CD4-positive, alpha-beta memory T cell (primary cell): ENCODE measurements at regions of chr12 and their contacts with region 1.

Region 1: DNA sequence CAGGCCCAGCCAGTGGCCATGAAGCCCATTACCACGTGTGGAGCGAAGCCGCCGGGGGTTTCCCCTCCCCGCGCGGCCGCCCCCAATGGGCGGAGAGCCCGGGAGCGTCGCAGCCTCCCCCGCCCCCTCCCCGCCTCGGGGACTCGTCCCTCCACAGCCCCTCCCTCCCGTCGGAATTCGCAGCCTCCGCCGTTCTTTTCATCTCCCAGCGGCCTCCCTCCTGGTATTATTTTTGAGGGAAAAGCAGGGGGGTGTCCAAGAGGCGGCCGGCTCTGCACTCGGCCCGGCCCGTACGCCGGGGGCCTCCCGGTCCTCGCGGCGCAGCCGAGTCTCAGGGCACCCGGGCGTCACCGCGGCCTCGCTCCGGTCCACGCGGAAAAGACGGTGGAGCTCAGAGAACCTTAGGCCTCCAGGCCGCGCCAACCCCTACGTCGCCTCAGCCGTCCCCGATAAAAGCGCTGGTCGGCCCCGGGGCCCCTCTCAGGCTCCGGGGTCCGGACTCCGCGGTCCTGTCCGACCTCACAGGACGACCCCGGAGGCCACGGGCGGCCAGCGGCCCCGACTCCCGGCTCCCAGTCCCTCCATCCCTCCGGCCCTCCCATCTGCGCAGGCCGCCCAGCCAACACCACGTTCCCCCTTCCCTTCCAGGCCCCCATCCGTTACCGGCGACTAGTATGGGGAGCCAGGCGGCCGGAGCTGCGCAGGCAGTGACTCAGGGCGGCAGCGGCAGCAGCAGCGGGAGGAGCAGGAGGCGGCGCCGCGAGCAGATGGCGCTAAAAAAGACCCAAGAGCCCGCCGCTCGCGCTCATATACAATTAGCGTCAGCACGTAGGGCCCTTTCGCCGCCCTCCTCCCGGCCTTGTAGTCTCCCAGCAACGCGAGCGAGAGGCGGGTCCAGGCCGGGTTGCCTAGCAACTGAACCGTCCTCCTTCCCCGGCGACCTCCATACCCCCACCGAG is at the start of gene NAP1L1:
- DNase-seq: peak; percentile 94 to 97 (median 96)
- H3K4me3 ChIP-seq: peak within 1 kb of the TSS; percentile 38 to 85
- H3K4me3 Mint-ChIP-seq: peak within 1 kb of the TSS; percentile 93 to 100 (median 98)
- H3K27ac ChIP-seq: peak within 1 kb of the TSS; percentile 100
- H3K27ac Mint-ChIP-seq: peak within 1 kb of the TSS; percentile 99 to 100 (median 100)
- H3K4me1 ChIP-seq: peaks cover 53% of the 10 kb centered on the region
- H3K4me1 Mint-ChIP-seq: peaks cover 33 to 68% (median 44%) of the 10 kb centered on the region in 4 donors
- H3K27me3 ChIP-seq: no peaks in the 10 kb centered on the region
- H3K27me3 Mint-ChIP-seq: peaks cover 0 to 2% of the 10 kb centered on the region in 2 donors
- total RNA-seq, gene NAP1L1: 673 to 718 TPM

Region 2: GRCh38 chr12:75390899-75391538 is 693.2 kb before region 1 on chr12 and contains the start of gene GLIPR1L2:
- CTCF ChIA-PET with region 1: no interaction called
- POLR2A ChIA-PET with region 1: interaction called, 8 read pairs
- intact Hi-C with region 1: loop called (anchors 1 kb)
- DNase-seq: peak; percentile 82 to 86 (median 84)
- H3K4me3 ChIP-seq: peak within 1 kb of the TSS; percentile 69 to 74
- H3K4me3 Mint-ChIP-seq: peak within 1 kb of the TSS; percentile 90 to 97 (median 93)
- H3K27ac ChIP-seq: peak within 1 kb of the TSS; percentile 74
- H3K27ac Mint-ChIP-seq: peak within 1 kb of the TSS; percentile 96 to 99 (median 97)
- H3K4me1 ChIP-seq: peaks cover 56% of the 10 kb centered on the region
- H3K4me1 Mint-ChIP-seq: peaks cover 38 to 71% (median 51%) of the 10 kb centered on the region in 4 donors
- H3K27me3 ChIP-seq: no peaks in the 10 kb centered on the region
- H3K27me3 Mint-ChIP-seq: no peaks in the 10 kb centered on the region
- total RNA-seq, gene GLIPR1L2: 0.47 to 0.55 TPM

Region 3: GRCh38 chr12:75977952-75978671 is 106.1 kb before region 1 on chr12:
- CTCF ChIA-PET with region 1: no interaction called
- POLR2A ChIA-PET with region 1: interaction called, 4 read pairs
- intact Hi-C with region 1: loop called (anchors 1 kb)
- DNase-seq: peak; percentile 69 to 95 (median 79)
- H3K4me3 ChIP-seq: no peak overlapping the region
- H3K4me3 Mint-ChIP-seq: peak overlapping the region; percentile 4 to 75 (median 48)
- H3K27ac ChIP-seq: peak overlapping the region; percentile 79
- H3K27ac Mint-ChIP-seq: peak overlapping the region; percentile 90 to 98 (median 92)
- H3K4me1 ChIP-seq: peaks cover 32% of the 10 kb centered on the region
- H3K4me1 Mint-ChIP-seq: peaks cover 25 to 55% (median 36%) of the 10 kb centered on the region in 4 donors
- H3K27me3 ChIP-seq: no peaks in the 10 kb centered on the region
- H3K27me3 Mint-ChIP-seq: no peaks in the 10 kb centered on the region

Region 4: GRCh38 chr12:76064904-76065303 is 19.3 kb before region 1 on chr12:
- CTCF ChIA-PET with region 1: interaction called, 3 read pairs
- POLR2A ChIA-PET with region 1: no interaction called
- intact Hi-C with region 1: loop called (anchors 2 kb)
- DNase-seq: no peak
- H3K4me3 ChIP-seq: no peak overlapping the region
- H3K4me3 Mint-ChIP-seq: peak overlapping the region in 1 of 8 donors; percentile 46
- H3K27ac ChIP-seq: no peak overlapping the region
- H3K27ac Mint-ChIP-seq: peak overlapping the region in 1 of 7 donors; percentile 23
- H3K4me1 ChIP-seq: peaks cover 6% of the 10 kb centered on the region
- H3K4me1 Mint-ChIP-seq: peaks cover 21 to 39% (median 27%) of the 10 kb centered on the region in 4 donors
- H3K27me3 ChIP-seq: no peaks in the 10 kb centered on the region
- H3K27me3 Mint-ChIP-seq: no peaks in the 10 kb centered on the region

Region 5: DNA sequence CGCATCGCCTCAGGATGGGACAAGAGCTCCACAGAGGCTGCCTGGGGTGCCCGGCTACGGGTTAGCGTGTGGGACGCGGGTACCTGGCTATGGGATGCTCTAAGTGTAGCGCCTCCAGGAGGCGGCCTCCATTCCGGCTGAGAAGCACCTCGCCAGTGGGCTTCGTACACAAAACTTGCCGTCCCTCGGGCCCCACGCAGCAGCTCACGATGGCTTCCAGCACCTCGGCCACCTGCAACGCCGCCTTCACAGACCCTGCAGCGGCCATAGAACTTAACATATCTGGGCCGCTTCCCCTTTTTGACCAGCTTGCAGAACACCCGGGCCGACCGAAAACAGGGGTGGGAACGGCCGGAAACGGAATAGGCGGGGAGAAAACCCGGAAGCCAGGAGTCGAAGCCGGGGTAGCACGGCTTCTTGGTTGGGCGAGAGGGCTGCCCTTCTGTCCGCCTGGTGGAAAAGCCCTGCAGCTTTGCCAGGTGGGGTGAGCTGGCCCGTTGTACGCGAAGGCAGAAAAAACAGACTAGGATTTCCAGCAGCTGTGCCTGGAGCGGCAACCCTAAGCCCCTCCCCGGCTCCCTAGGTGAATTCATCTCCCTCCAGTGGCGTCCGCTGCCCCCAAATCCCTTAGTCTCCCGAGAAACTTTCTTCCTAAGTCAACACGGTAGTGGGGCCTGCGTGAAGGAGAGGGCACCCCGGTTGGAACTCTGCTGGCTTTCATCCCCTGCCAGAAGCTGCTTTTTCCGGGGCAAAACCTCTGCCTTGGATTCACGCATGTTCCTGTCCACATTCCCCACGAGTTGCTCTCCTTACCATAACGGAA is 264.1 kb after region 1 on chr12 and contains the start of gene BBS10:
- CTCF ChIA-PET with region 1: no interaction called
- POLR2A ChIA-PET with region 1: interaction called, 17 read pairs
- intact Hi-C with region 1: loop called (anchors 1 kb)
- DNase-seq: peak; percentile 83 to 89 (median 85)
- H3K4me3 ChIP-seq: peak within 1 kb of the TSS; percentile 64 to 82
- H3K4me3 Mint-ChIP-seq: peak within 1 kb of the TSS; percentile 95 to 99 (median 96)
- H3K27ac ChIP-seq: peak within 1 kb of the TSS; percentile 63
- H3K27ac Mint-ChIP-seq: peak within 1 kb of the TSS; percentile 90 to 97 (median 94)
- H3K4me1 ChIP-seq: peaks cover 23% of the 10 kb centered on the region
- H3K4me1 Mint-ChIP-seq: peaks cover 13 to 43% (median 23%) of the 10 kb centered on the region in 4 donors
- H3K27me3 ChIP-seq: no peaks in the 10 kb centered on the region
- H3K27me3 Mint-ChIP-seq: no peaks in the 10 kb centered on the region
- total RNA-seq, gene BBS10: 11.5 to 12.6 TPM

Region 6: DNA sequence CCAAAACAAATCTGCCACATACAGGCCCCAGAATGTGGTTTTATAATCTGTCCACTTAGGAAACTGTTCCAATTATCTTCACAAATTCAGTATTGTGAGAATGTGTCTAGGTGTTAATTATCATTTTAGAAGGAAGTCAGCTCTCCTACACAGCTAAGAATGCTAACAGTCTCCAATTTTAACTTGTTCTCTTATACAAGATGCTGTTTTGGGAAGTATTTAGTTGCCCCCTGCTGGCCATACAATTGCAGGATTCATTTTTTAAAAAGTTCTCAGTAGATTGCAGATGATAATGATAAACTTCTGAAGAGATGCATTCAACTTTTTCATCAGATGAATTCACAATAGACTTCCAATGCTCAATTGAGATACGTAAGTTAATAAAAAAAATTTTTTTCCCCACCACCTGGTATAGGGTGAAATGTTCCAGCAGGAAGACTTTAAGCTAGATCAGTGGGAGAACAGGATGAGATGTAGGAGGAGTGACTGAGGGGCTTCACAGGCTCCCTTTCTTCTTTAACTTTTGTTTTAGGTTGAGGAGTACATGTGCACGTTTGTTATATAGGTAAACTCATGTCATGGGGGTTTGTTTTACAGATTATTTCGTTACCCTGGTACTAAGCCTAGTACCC is 502.7 kb after region 1 on chr12:
- CTCF ChIA-PET with region 1: interaction called, 3 read pairs
- POLR2A ChIA-PET with region 1: interaction called, 4 read pairs
- intact Hi-C with region 1: loop called (anchors 1 kb)
- DNase-seq: peak in 4 of 5 donors; percentile 59 to 63 (median 60)
- H3K4me3 ChIP-seq: no peak overlapping the region
- H3K4me3 Mint-ChIP-seq: no peak overlapping the region
- H3K27ac ChIP-seq: no peak overlapping the region
- H3K27ac Mint-ChIP-seq: peak overlapping the region in 2 of 7 donors; percentile 46 to 83
- H3K4me1 ChIP-seq: no peaks in the 10 kb centered on the region
- H3K4me1 Mint-ChIP-seq: peaks cover 0 to 3% (median 0%) of the 10 kb centered on the region in 4 donors
- H3K27me3 ChIP-seq: no peaks in the 10 kb centered on the region
- H3K27me3 Mint-ChIP-seq: no peaks in the 10 kb centered on the region